PC-9 (cell line): ENCODE measurements at regions of chr4 and their contacts with region 1.

Region 1: DNA sequence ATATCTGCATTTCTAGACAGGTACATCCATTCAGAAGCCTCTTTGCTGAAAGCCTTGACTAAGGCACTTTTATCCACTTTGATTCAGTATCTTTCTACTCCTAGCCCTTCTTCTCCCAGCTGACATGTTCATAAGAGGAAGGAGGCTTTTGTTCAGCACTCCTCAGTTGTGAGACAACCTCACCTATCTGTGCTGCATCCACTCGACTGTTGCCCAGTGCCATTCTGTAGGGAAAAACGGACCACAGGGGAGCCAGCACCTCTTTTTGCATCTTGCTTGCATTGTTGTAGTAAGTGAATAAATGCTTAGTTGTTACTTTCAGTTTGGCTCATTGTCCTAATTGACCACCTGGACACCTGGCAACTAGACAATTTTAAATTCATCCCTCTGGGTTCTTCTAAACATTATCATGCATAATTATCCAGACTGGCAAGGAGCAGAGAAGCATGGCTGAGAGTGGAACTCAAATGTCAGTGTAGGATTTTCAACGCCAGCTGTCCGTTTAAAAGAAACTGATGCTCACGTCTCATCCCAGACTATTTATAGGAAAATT is 83.8 kb upstream of the BOD1L1 start:
- DNase-seq: no peak
- H3K4me3 ChIP-seq: no peak overlapping the region
- H3K27ac ChIP-seq: no peak overlapping the region
- H3K4me1 ChIP-seq: 0 out of 2 replicates have a peak, but pooled peaks cover 8% of the 10 kb centered on the region
- H3K27me3 ChIP-seq: no peaks in the 10 kb centered on the region
- CTCF ChIP-seq: no peak

Region 2: GRCh38 chr4:13452927-13453579 is 258.3 kb before region 1 on chr4:
- CTCF ChIA-PET with region 1: no interaction called
- POLR2A ChIA-PET with region 1: no interaction called
- intact Hi-C with region 1: no loop called
- DNase-seq: no peak
- H3K4me3 ChIP-seq: no peak overlapping the region
- H3K27ac ChIP-seq: no peak overlapping the region
- H3K4me1 ChIP-seq: no peaks in the 10 kb centered on the region
- H3K27me3 ChIP-seq: no peaks in the 10 kb centered on the region
- CTCF ChIP-seq: no peak

Region 3: DNA sequence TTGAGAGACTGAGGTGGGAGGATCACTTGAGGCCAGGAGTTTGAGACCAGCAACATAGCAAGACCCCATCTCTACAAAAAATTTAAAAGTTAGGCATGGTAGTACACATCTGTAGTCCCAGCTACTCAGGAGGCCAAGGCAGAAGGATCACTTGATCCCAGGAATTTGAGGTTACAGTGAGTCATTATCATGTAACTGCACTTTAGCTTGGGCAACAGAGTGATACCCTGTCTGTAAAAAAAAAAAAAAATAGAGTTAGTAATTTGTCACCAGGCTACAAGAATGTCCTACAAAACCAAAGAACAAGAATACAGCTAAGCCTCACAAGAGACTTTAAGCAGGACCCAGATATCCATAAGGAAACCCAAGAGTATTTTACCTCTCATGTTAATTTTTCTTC is 200.2 kb before region 1 on chr4:
- CTCF ChIA-PET with region 1: no interaction called
- POLR2A ChIA-PET with region 1: interaction called, 13 read pairs
- intact Hi-C with region 1: no loop called
- DNase-seq: no peak
- H3K4me3 ChIP-seq: no peak overlapping the region
- H3K27ac ChIP-seq: no peak overlapping the region
- H3K4me1 ChIP-seq: no peaks in the 10 kb centered on the region
- H3K27me3 ChIP-seq: no peaks in the 10 kb centered on the region
- CTCF ChIP-seq: no peak